Prostate gland (tissue), 2 donors: ENCODE measurements at regions of chr7 and their contacts with region 1.

Region 1: DNA sequence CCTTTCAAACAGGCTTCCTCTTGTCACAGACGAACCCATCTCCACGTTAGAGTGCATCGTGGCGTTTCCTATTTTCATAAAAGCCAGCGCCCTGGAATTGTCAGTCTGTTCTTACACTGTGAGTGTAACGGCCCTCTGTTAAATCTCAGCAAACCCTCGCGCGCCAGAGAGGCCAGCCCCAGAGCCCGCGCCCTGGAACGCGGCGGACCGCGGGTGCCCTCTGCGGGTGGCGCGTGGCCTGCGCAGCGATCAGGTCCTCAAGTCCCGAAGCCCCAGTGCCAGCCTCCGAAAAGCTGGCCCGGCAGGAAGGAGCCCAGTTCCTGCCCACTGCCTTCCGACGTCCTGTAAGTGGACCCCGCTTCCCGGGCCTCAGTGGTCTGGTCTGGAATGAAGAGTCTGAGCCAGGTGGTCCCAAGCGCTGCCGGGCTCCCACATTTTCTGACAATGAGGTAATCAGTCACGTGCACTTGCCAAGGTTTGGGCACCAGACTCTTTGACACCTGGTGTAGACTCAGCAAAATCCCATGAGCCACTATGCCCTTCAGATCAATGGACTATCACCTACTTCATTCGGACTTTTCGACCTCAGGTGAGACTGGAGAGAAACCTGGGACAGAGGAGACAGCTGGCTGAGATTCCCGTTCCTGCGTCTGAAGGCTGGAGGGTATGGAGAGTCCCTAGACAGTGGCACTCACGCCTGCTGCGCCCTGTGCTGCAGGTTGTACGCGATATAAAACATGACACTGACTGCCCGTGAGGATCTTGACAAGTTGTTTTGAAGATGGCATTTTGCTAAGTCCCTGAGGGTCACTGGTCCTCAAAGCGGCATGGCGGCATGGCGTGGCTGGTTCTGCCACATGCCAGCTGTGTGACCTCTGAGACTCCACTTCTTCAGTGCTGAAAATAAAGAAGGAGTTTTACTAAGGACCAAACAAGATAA is 109.4 kb upstream of the LANCL2 start:
- DNase-seq: peak; percentile 87
- H3K4me3 ChIP-seq: peak overlapping the region; percentile 44 to 51
- H3K27ac ChIP-seq: peak overlapping the region; percentile 50 to 59
- H3K4me1 ChIP-seq: peaks cover 3% of the 10 kb centered on the region
- H3K27me3 ChIP-seq: no peaks in the 10 kb centered on the region
- CTCF ChIP-seq: peak; percentile 60 to 95 (median 87)
- POLR2A ChIP-seq: no peak

Region 2: DNA sequence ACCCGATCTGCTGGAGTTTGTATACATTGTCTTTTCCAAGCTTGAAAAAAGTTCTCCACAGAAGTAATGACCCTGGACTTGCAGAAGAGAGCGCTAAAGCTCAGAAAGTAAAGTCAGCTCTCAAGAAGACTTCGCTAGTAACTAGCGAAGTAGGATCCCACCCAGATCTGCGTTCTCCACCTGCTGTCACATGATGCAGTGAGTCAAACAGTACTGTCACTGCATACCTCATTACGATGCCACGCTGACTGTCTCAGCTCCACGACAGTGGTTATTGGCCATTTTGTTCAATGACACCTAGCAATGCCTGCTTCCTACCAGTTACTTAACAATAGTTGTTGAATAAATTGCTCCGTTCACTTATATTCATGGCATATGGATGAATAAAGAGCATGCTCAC is 467.1 kb before region 1 on chr7:
- intact Hi-C with region 1: loop called (anchors 2 kb)
- DNase-seq: peak; percentile 49
- H3K4me3 ChIP-seq: no peak overlapping the region
- H3K27ac ChIP-seq: no peak overlapping the region
- H3K4me1 ChIP-seq: no peaks in the 10 kb centered on the region
- H3K27me3 ChIP-seq: no peaks in the 10 kb centered on the region
- CTCF ChIP-seq: peak in 3 of 4 experiments; percentile 51 to 75 (median 73)
- POLR2A ChIP-seq: no peak

Region 3: DNA sequence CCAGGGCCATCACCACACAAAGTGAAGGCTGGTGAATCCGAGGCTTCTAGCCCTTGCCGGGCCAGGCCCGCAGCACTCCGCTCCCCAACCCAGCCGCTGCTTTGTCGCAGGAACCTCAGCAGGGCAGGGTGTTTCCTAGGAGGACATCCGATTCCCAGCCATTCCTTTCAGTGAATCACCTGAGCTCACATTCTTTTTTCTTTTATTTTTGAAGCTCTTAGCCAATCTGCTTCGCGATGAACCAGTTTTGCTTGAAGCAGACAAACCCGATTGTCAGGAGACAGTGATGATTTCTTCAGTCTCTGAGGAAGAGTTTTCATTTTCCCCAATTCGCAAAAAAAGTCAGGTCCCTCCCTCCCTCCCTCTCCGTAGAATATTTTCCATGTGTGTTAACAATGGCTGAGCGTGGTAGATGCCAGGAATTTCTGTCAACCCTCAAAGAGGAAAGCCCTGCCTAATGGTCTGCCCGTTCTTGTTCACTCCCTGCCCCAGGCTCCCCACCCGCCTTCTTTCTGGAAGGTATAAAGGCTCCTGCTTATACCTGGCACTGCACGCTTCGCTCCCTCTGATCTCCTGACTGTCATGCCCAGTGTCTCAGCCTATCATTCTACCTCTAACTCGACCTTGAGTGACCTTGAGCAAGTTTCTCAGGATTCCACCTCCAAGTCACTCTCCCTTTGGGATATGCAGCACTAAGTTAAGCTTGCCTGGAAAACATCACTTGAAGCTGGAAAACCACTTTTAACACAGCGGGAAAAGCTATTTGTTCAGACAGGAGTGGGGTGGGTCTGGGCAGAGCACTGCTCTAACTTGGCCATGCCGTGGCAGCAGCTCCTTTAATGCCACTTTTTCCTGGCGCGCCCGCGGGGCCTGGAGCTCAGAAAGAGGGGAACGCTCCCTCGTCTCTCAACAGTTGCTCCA is 201.9 kb before region 1 on chr7:
- intact Hi-C with region 1: loop called (anchors 10 kb)
- DNase-seq: peak; percentile 73
- H3K4me3 ChIP-seq: no peak overlapping the region
- H3K27ac ChIP-seq: peak overlapping the region; percentile 63 to 72
- H3K4me1 ChIP-seq: peaks cover 5% of the 10 kb centered on the region
- H3K27me3 ChIP-seq: no peaks in the 10 kb centered on the region
- CTCF ChIP-seq: peak in 2 of 4 experiments; percentile 44 to 54
- POLR2A ChIP-seq: no peak

Region 4: GRCh38 chr7:55132890-55133551 is 122.7 kb before region 1 on chr7:
- intact Hi-C with region 1: loop called (anchors 10 kb)
- DNase-seq: no peak
- H3K4me3 ChIP-seq: no peak overlapping the region
- H3K27ac ChIP-seq: no peak overlapping the region
- H3K4me1 ChIP-seq: peaks cover 13% of the 10 kb centered on the region
- H3K27me3 ChIP-seq: no peaks in the 10 kb centered on the region
- CTCF ChIP-seq: no peak
- POLR2A ChIP-seq: no peak